Common myeloid progenitor, CD34-positive (primary cell): ENCODE measurements at regions of chr16 and their contacts with region 1.

Region 1: DNA sequence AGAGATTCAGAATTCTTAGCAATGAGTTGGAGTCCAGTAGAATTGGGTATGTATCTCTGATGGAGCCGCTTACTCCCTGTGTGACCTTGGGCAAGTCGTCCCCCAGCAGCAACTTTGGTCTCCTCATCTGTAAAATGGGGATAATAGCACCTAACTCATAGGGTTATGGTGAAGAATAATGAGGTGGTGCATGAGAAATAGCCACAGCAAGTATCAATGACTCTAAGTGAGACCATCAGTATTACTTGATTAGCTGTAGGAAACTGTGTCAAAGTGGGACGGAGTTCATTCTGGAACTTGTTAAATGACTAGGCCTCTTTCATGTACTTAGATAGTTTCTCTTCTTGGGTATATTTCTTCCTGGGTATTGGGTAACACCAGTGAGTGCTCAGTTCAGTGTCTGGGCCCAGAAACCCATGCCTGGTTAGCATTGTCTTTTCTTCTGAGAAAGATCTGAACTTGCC is 6.4 kb downstream of the PRKCB start:
- DNase-seq: no peak
- H3K4me3 ChIP-seq: no peak overlapping the region
- H3K27ac ChIP-seq: no peak overlapping the region
- H3K4me1 ChIP-seq: peaks cover 4 to 11% (median 10%) of the 10 kb centered on the region in 4 experiments
- H3K27me3 ChIP-seq: no peaks in the 10 kb centered on the region

Region 2: DNA sequence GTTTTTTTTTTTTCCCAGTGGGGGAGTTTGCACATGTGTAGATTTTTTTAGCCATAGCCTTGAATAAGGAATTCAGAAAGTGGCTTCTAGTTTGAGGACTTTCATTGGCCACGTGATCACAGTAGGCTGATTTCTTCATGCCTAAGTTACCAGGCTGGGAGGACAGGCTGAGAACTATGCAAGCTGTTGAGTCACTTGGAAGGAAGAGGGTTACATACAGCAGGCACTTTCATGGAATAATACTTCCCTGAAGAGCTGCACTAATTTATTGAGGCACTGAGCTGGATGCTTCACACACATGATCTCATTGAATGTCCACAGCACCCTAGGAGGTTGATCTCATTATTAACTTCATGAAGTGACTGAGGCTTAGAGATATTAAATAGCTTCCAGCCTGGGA is 16.4 kb after region 1 on chr16:
- CTCF ChIA-PET with region 1: interaction called, 11 read pairs
- POLR2A ChIA-PET with region 1: interaction called, 3 read pairs
- DNase-seq: peak in 1 of 3 donors; percentile 57
- H3K4me3 ChIP-seq: peak overlapping the region in 1 of 7 experiments; percentile 3
- H3K27ac ChIP-seq: no peak overlapping the region
- H3K4me1 ChIP-seq: peaks cover 40 to 65% (median 54%) of the 10 kb centered on the region in 4 experiments
- H3K27me3 ChIP-seq: no peaks in the 10 kb centered on the region

Region 3: DNA sequence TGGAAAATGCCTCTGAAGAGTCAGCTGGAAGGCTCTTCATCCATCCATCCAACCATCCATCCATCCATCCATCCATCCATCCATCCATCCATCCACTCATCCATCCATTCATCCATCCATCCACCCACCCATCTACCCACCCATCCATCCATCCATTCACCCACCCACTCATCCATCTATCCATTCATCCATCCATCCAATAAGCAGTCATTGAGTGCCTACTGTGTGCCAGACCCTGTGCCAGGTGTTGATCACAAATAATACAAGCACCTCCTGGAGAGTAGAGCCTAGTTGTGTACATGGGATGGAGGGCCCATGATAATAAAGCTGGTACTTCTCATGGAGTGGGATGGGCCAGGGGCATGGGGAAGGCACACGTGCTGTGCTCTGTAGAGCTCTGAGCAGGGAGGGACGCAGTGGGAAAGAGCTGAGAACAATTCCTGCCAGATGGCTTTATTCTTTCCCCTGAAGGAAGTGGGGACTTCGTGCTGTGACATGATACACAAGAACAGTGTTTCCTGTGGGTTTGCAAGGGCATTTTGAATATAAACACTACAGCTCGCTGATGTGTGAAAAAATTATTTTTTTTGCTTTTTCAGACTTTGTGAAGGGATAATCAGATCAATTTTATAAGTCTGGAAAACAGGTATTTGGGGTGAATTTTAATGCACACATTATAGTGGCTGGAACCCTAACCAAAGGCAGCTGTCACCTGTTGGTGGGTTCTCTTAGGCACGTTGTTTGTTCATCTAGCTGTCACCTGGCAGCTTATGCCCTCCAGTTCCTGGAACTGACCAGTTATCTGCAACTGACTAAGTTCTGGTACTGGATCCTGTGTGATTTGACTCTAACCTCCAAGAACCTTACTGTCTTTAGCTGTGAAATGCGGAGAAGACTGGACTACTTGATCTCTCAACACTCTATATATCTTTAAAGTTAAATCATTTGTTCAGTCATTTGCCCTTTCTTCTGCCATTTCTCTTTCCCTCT is 55.0 kb after region 1 on chr16:
- CTCF ChIA-PET with region 1: no interaction called
- POLR2A ChIA-PET with region 1: no interaction called
- DNase-seq: peak; percentile 73 to 92 (median 85)
- H3K4me3 ChIP-seq: peak overlapping the region in 5 of 7 experiments; percentile 4 to 63 (median 23)
- H3K27ac ChIP-seq: peak overlapping the region; percentile 42 to 77
- H3K4me1 ChIP-seq: peaks cover 41 to 72% (median 63%) of the 10 kb centered on the region in 4 experiments
- H3K27me3 ChIP-seq: no peaks in the 10 kb centered on the region